Activated CD4-positive, alpha-beta memory T cell treated with anti-CD3 and anti-CD28 coated beads, Interleukin-2, amount 10 ng/mL, durations not matched to agents 7 days and 5 days (primary cell): ENCODE measurements at regions of chr17 and their contacts with region 1.

Region 1: DNA sequence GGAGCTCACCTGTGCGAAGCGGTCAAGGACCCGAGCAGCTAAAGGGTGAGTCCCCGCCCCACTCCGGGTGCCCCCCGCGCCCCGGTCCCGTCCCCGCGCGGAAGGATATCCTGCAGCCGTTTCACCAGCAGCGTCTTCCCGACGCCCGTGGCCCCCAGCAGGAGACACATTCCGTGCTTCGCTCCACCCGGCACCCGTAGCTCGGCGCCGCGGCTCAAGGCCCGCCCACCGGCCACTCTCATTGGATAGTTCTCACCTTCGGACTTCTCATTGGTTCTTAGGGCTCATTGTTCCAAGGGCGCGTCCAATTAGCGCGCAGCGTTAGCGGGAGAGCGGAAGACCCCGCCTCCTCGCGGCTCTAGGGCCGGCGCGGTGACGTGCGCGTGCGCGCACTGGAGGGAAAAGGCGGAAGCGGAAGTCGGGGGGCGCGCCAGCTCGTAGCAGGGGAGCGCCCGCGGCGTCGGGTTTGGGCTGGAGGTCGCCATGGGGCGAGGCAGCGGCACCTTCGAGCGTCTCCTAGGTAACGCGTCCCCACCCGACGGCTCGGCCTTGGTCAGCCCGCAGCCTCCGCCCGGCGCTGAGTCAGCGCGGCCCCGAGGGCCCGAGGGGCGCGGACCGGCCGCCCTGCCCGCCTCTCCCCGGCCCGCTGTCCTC is at the starts of genes ARL16 and HGS:
- DNase-seq: peak; percentile 98
- H3K4me3 Mint-ChIP-seq: peak within 1 kb of the TSS; percentile 86
- H3K27ac Mint-ChIP-seq: peak within 1 kb of the TSS; percentile 90
- H3K4me1 Mint-ChIP-seq: peaks cover 42% of the 10 kb centered on the region
- H3K27me3 Mint-ChIP-seq: no peaks in the 10 kb centered on the region
- total RNA-seq, gene ARL16: 17.5 to 17.8 TPM
- total RNA-seq, gene HGS: 122 to 130 TPM

Region 2: GRCh38 chr17:81666342-81667191 is 17.1 kb before region 1 on chr17 and contains the starts of genes CCDC137 and OXLD1:
- CTCF ChIA-PET with region 1: interaction called, 6 read pairs
- POLR2A ChIA-PET with region 1: interaction called, 47 read pairs
- DNase-seq: peak; percentile 94
- H3K4me3 Mint-ChIP-seq: peak within 1 kb of the TSS; percentile 93
- H3K27ac Mint-ChIP-seq: peak within 1 kb of the TSS; percentile 94
- H3K4me1 Mint-ChIP-seq: peaks cover 62% of the 10 kb centered on the region
- H3K27me3 Mint-ChIP-seq: no peaks in the 10 kb centered on the region
- total RNA-seq, gene CCDC137: 28.8 to 33.3 TPM
- total RNA-seq, gene OXLD1: 59.3 TPM

Region 3: GRCh38 chr17:81696218-81696941 is 12.7 kb after region 1 on chr17:
- CTCF ChIA-PET with region 1: interaction called, 42 read pairs
- POLR2A ChIA-PET with region 1: interaction called, 111 read pairs
- DNase-seq: no peak
- H3K4me3 Mint-ChIP-seq: no peak overlapping the region
- H3K27ac Mint-ChIP-seq: no peak overlapping the region
- H3K4me1 Mint-ChIP-seq: peaks cover 9% of the 10 kb centered on the region
- H3K27me3 Mint-ChIP-seq: no peaks in the 10 kb centered on the region

Region 4: GRCh38 chr17:81711814-81712467 is 28.2 kb after region 1 on chr17 and contains the start of gene SLC25A10:
- CTCF ChIA-PET with region 1: interaction called, 3 read pairs
- POLR2A ChIA-PET with region 1: interaction called, 19 read pairs
- DNase-seq: peak; percentile 86
- H3K4me3 Mint-ChIP-seq: peak within 1 kb of the TSS; percentile 89
- H3K27ac Mint-ChIP-seq: peak within 1 kb of the TSS; percentile 64
- H3K4me1 Mint-ChIP-seq: peaks cover 28% of the 10 kb centered on the region
- H3K27me3 Mint-ChIP-seq: no peaks in the 10 kb centered on the region
- total RNA-seq, gene SLC25A10: 18.5 to 22.1 TPM

Region 5: DNA sequence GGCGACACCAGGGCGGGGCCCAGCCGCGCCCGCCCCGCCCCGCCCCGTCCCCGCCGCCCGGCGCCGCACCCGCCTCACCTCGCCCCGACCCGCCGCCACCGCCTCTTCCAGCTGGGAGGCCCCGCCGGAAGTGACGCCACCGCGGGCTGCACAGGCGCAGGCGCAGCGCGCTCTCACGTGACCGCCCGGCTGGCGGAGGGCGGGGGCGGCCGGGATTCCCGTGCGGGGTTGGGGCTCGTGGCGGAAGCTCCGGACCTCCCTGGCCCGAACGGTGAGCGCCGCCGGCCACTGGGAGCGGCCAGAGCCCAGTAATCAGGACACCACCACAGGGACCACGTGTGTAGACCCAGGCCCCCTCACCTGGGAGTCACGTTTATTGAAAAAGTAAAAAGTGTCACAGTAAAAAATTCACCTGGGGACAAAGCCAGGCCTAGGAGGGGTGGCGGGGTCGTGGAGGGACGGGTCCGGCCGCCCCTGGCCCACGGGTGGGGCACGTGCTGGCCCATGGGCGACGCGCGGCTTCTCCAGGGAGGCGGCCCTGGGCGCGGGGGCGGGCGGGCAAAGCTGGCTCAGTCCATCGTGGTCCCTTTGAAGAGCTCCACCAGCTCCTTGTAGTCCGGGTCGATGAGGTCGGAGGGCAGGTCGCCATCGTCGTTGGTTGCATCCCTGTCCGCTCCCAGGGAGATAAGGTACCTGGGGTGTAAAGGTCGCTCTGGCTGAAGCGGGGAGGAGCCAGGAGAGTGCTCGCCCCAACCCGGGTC is 149.6 kb after region 1 on chr17 and contains the start of gene MCRIP1:
- CTCF ChIA-PET with region 1: no interaction called
- POLR2A ChIA-PET with region 1: interaction called, 10 read pairs
- DNase-seq: peak; percentile 96
- H3K4me3 Mint-ChIP-seq: peak within 1 kb of the TSS; percentile 88
- H3K27ac Mint-ChIP-seq: peak within 1 kb of the TSS; percentile 92
- H3K4me1 Mint-ChIP-seq: peaks cover 31% of the 10 kb centered on the region
- H3K27me3 Mint-ChIP-seq: no peaks in the 10 kb centered on the region
- total RNA-seq, gene MCRIP1: 37.1 to 38.2 TPM